A549 (cell line): ENCODE measurements at regions of chr17 and their contacts with region 1.

Region 1: GRCh38 chr17:68019675-68020408 is 15.7 kb upstream of the KPNA2 start:
- DNase-seq: peak; percentile 97 to 98
- ATAC-seq: peak; percentile 95 to 97
- H3K4me3 ChIP-seq: peak overlapping the region; percentile 48
- H3K27ac ChIP-seq: peak overlapping the region; percentile 84 to 87
- H3K4me1 ChIP-seq: peaks cover 9% of the 10 kb centered on the region; the same call in 2 of the 3 replicates
- CTCF ChIP-seq: no peak; the same call in 2 of the 3 replicates
- EP300 ChIP-seq: no peak
- POLR2A ChIP-seq: peak; percentile 95
- RAD21 ChIP-seq: no peak; a peak in 1 of 5 replicates

Region 2: DNA sequence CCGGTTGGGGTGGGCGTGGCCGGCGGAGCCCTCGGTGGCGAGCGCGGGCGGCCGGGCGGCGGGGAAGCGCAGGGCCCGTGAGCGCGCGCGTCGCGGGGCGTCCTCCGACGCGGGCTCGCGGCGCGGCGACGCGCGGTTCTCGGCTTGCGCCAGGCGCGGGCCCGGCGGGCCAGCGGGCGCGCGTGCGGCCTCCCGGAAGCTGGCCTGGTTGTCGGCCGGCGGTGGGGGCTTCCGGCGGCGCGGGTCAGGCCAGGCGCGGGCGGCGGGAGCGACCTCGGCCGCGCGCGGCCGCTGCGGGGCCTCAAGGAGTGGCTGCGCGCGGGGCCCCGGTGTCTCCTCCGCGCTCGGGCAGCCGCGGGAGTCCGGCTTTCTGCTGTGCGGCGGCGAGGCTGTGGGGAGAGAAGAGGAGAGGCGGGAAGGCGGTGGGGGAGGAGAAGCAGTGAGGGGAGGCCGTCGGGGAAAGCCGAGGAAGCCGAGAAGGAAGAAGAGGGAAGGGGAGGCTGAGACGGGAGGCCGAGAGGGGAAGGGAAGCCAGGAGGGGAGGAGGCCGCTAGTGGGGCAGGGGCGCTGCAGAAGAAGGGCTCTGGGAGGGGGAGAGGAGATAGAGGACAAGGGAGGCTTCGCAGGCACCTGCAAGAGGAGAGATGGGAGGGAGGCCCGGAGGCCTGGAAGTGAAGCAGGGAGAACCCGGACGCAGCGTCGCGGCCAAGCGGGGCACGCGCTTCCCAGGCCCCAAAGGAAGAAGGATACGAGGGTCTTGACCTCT is 26.1 kb before region 1 on chr17:
- CTCF ChIA-PET with region 1: interaction called, 5 read pairs
- POLR2A ChIA-PET with region 1: interaction called, 19 read pairs
- DNase-seq: peak; percentile 77 to 90
- ATAC-seq: peak; percentile 71 to 73
- H3K4me3 ChIP-seq: peak overlapping the region; percentile 78
- H3K27ac ChIP-seq: peak overlapping the region; percentile 93 to 95
- H3K4me1 ChIP-seq: peaks cover 23% of the 10 kb centered on the region
- CTCF ChIP-seq: no peak
- EP300 ChIP-seq: no peak
- POLR2A ChIP-seq: peak; percentile 68
- RAD21 ChIP-seq: no peak

Region 3: GRCh38 chr17:68035523-68036303 is 15.9 kb after region 1 on chr17 and contains the start of gene KPNA2:
- CTCF ChIA-PET with region 1: interaction called, 8 read pairs
- POLR2A ChIA-PET with region 1: interaction called, 21 read pairs
- DNase-seq: peak; percentile 99
- ATAC-seq: peak; percentile 92
- H3K4me3 ChIP-seq: peak within 1 kb of the TSS; percentile 91
- H3K27ac ChIP-seq: peak within 1 kb of the TSS; percentile 94 to 95
- H3K4me1 ChIP-seq: peaks cover 35% of the 10 kb centered on the region
- CTCF ChIP-seq: no peak
- EP300 ChIP-seq: no peak
- POLR2A ChIP-seq: peak; percentile 97
- RAD21 ChIP-seq: no peak
- polyA plus RNA-seq, gene KPNA2: 382 and 429 TPM in 2 replicates

Region 4: GRCh38 chr17:68107373-68107772 is 87.5 kb after region 1 on chr17:
- CTCF ChIA-PET with region 1: no interaction called
- POLR2A ChIA-PET with region 1: no interaction called
- DNase-seq: no peak
- ATAC-seq: no peak
- H3K4me3 ChIP-seq: no peak overlapping the region
- H3K27ac ChIP-seq: no peak overlapping the region
- H3K4me1 ChIP-seq: peaks cover 10% of the 10 kb centered on the region
- CTCF ChIP-seq: no peak
- EP300 ChIP-seq: no peak
- POLR2A ChIP-seq: no peak
- RAD21 ChIP-seq: no peak